ENCODE measurements at regions of chr12 and their contacts with region 1.

Region 1: DNA sequence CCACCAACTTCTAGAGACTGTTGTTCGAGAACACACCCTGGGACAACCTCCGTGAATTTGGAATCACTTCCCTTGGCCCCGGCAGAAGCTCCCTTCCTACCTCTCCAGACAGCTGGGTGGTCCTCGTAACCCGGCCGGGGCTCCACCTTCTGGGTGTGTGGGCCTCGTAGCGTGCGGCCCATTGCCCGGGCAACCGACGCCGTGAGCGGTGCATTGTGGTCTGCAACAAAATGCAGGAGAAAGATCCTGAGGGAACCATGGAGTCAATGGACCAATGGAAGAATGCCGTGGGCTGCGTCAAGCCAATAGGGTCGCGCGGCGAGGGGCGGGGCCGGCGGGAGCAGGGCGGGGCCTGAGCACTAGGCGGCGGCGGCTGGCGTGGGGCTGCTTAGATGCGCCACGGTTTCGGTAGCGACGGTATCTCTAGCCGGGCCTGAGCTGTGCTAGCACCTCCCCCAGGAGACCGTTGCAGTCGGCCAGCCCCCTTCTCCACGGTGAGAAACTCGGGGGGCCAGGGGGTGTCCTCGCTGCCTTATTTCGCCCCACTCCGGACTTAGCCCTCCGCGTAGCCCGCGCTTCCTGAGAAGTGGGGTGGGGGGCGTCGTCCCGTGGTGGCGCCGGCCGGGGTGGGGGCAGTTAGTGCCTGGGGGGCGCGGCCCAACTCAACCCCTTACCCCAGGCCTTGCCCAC is at the start of gene DYNLL1:
- DNase-seq: peak; percentile 95 to 99 (median 97)
- ATAC-seq: peak; percentile 99
- H3K4me3 ChIP-seq: peak within 1 kb of the TSS; percentile 82
- H3K4me3 Mint-ChIP-seq: peak within 1 kb of the TSS; percentile 83 to 98 (median 94)
- H3K27ac ChIP-seq: peak within 1 kb of the TSS; percentile 84
- H3K27ac Mint-ChIP-seq: peak within 1 kb of the TSS; percentile 58 to 94 (median 90)
- H3K4me1 ChIP-seq: peaks cover 9% of the 10 kb centered on the region in 2 donors
- H3K4me1 Mint-ChIP-seq: peaks cover 13 to 48% (median 33%) of the 10 kb centered on the region in 7 donors
- H3K27me3 ChIP-seq: no peaks in the 10 kb centered on the region
- H3K27me3 Mint-ChIP-seq: no peaks in the 10 kb centered on the region
- total RNA-seq, gene DYNLL1: 35.0 to 301 (median 72.7) TPM

Region 2: DNA sequence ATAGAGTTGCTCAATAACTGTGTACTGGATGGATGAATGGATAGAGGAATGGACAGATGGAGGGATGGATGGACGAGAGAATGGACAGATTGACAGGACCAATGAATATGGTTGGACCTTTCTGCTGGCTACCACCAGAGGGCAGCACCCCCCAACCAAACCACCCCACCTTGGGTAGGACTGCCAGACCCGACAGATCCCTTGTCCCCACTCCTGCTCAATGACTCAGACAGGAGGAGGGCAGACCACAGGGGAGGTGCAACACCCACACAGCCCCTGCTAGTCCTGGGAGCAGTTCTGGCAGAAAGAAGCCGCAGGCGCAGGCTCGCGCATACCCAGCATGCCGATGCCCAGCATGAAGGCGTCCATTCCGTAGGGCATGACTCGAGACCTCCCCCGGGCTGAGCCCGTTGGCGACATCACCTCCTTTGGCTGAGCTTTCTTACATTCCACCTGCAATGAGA is 139.3 kb before region 1 on chr12:
- CTCF ChIA-PET with region 1: interaction called, 3 read pairs
- POLR2A ChIA-PET with region 1: no interaction called
- intact Hi-C with region 1: loop called in 1 of 2 experiments (anchors 1 kb)
- DNase-seq: peak; percentile 47 to 78 (median 61)
- ATAC-seq: peak; percentile 88
- H3K4me3 ChIP-seq: no peak overlapping the region
- H3K4me3 Mint-ChIP-seq: no peak overlapping the region
- H3K27ac ChIP-seq: no peak overlapping the region
- H3K27ac Mint-ChIP-seq: no peak overlapping the region
- H3K4me1 ChIP-seq: no peaks in the 10 kb centered on the region
- H3K4me1 Mint-ChIP-seq: peaks cover 0 to 3% (median 0%) of the 10 kb centered on the region in 7 donors
- H3K27me3 ChIP-seq: no peaks in the 10 kb centered on the region
- H3K27me3 Mint-ChIP-seq: peaks cover 30 to 36% (median 31%) of the 10 kb centered on the region in 5 donors

Region 3: DNA sequence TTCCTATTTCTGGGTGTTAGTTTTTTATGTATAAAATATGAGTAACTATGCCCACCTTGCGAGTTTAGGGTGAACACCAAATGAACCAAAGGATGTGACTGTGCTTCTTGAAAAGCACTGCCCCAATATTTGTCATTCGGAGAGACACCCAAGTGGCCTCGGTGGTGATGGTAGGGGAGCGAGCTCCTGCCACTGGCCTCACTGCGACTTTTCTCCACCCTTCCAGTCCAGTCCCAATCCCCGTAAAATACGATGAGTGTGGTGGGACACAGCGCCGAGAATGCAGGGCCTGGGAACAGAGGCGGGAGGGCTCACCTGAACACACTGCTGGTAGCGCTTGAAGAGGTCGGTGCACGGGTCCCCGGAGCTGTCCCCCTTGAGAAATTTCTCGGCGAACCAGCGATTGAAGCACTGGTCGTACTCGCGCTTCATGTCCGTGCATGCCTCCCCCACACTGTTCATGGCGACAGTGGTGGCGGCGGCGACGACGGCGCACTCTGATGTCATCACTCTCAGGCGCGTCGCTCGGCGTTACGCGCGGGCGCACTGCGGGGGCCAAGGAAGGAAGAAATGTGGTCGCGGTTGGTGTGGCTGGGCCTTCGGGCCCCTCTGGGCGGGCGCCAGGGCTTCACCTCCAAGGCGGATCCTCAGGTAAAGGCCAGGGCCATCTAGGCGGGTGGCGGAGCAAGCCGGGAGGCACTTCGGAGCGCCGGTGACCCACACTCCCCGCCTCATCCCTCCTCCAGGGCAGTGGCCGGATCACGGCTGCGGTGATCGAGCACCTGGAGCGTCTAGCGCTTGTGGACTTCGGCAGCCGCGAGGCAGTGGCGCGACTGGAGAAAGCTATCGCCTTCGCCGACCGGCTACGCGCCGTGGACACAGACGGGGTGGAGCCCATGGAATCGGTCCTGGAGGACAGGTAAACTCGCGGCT is 49.7 kb before region 1 on chr12 and contains the starts of genes GATC and TRIAP1:
- CTCF ChIA-PET with region 1: no interaction called
- POLR2A ChIA-PET with region 1: no interaction called
- intact Hi-C with region 1: loop called (anchors 2 kb)
- DNase-seq: peak; percentile 76 to 93 (median 84)
- ATAC-seq: peak; percentile 98
- H3K4me3 ChIP-seq: peak within 1 kb of the TSS; percentile 99
- H3K4me3 Mint-ChIP-seq: peak within 1 kb of the TSS; percentile 93 to 99 (median 98)
- H3K27ac ChIP-seq: peak within 1 kb of the TSS; percentile 91
- H3K27ac Mint-ChIP-seq: peak within 1 kb of the TSS; percentile 95 to 100 (median 98)
- H3K4me1 ChIP-seq: peaks cover 15 to 24% of the 10 kb centered on the region in 2 donors
- H3K4me1 Mint-ChIP-seq: peaks cover 14 to 45% (median 29%) of the 10 kb centered on the region in 7 donors
- H3K27me3 ChIP-seq: no peaks in the 10 kb centered on the region
- H3K27me3 Mint-ChIP-seq: peaks cover 0 to 2% (median 0%) of the 10 kb centered on the region in 5 donors
- total RNA-seq, gene GATC: 21.8 to 30.6 (median 26.9) TPM
- total RNA-seq, gene TRIAP1: 15.9 to 38.0 (median 19.6) TPM

Region 4: GRCh38 chr12:120528861-120529525 is 33.1 kb after region 1 on chr12 and contains the start of gene COQ5:
- CTCF ChIA-PET with region 1: interaction called, 4 read pairs
- POLR2A ChIA-PET with region 1: interaction called, 14 read pairs
- intact Hi-C with region 1: loop called (anchors 1 kb)
- DNase-seq: peak; percentile 64 to 83 (median 80)
- ATAC-seq: peak; percentile 97
- H3K4me3 ChIP-seq: peak within 1 kb of the TSS; percentile 75
- H3K4me3 Mint-ChIP-seq: peak within 1 kb of the TSS; percentile 93 to 100 (median 99)
- H3K27ac ChIP-seq: peak within 1 kb of the TSS; percentile 88
- H3K27ac Mint-ChIP-seq: peak within 1 kb of the TSS; percentile 96 to 100 (median 98)
- H3K4me1 ChIP-seq: no peaks in the 10 kb centered on the region
- H3K4me1 Mint-ChIP-seq: peaks cover 10 to 30% (median 23%) of the 10 kb centered on the region in 7 donors
- H3K27me3 ChIP-seq: no peaks in the 10 kb centered on the region
- H3K27me3 Mint-ChIP-seq: no peaks in the 10 kb centered on the region
- total RNA-seq, gene COQ5: 11.3 to 26.1 (median 23.5) TPM